PC-3 (cell line): ENCODE measurements at regions of chr7 and their contacts with region 1.

Region 1: DNA sequence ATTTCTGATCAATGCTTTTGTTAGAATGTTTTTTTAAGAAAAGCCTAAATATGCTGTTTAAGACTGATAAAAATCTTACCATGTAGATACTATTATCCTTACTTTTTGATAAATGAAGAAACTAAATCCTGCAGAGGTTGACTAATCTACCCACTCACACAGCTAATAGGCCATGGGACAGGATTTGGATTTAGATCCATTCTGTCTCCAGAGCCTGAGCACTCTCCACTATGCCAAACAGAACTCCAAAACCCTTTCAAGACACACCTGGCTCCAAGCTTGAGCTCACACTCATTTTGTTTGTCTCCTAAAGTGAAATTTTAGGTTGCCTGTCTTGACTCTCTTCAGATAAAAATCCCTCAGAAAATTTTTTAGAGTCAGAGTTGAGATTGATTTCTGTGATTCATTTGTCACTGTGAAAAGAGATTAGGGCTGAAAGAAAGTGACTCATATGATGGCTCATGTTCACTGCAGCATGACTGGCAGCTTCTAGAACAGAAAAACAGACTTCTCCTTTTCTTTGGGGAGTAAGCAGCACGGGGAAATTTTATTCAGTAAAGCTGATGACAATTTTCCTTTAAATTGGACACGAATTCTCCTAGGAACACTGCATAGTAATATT is 132.3 kb upstream of the POT1 start:
- DNase-seq: peak; percentile 78
- ATAC-seq: peak; percentile 80
- H3K4me3 ChIP-seq: peak overlapping the region; percentile 11; the same call in 1 of the 2 replicates
- H3K27ac ChIP-seq: peak overlapping the region; percentile 77
- H3K4me1 ChIP-seq: peaks cover 16% of the 10 kb centered on the region
- H3K27me3 ChIP-seq: no peaks in the 10 kb centered on the region
- CTCF ChIP-seq: no peak

Region 2: GRCh38 chr7:125201002-125201401 is 139.1 kb after region 1 on chr7:
- CTCF ChIA-PET with region 1: interaction called, 9 read pairs
- POLR2A ChIA-PET with region 1: no interaction called
- intact Hi-C with region 1: loop called (anchors 1 kb)
- DNase-seq: no peak
- ATAC-seq: no peak
- H3K4me3 ChIP-seq: no peak overlapping the region
- H3K27ac ChIP-seq: no peak overlapping the region
- H3K4me1 ChIP-seq: no peaks in the 10 kb centered on the region
- H3K27me3 ChIP-seq: no peaks in the 10 kb centered on the region
- CTCF ChIP-seq: no peak

Region 3: DNA sequence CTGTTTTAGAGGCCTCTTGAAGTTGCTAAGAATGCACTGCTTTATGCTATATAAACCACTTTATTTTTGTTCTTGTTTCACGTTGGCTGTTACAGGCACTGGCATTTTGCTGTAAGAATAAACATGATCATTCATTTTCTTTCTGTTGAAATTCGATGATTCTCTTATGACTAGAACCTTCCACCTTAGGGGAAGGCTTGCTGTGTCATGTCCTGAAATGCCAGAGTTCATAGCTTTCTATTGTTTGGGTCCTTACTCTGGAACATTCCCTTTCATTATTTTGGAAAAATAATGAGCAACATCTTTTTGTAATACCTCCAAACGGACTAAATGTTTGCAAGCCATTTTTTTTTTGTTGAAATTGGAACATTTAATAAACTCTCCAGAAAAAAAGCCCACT is 362.8 kb after region 1 on chr7:
- CTCF ChIA-PET with region 1: no interaction called
- POLR2A ChIA-PET with region 1: no interaction called
- intact Hi-C with region 1: loop called (anchors 5 kb)
- DNase-seq: no peak
- ATAC-seq: no peak
- H3K4me3 ChIP-seq: no peak overlapping the region
- H3K27ac ChIP-seq: no peak overlapping the region
- H3K4me1 ChIP-seq: peaks cover 11% of the 10 kb centered on the region
- H3K27me3 ChIP-seq: no peaks in the 10 kb centered on the region
- CTCF ChIP-seq: no peak

Region 4: GRCh38 chr7:125602441-125602840 is 540.6 kb after region 1 on chr7:
- CTCF ChIA-PET with region 1: no interaction called
- POLR2A ChIA-PET with region 1: no interaction called
- intact Hi-C with region 1: loop called (anchors 5 kb)
- DNase-seq: no peak
- ATAC-seq: peak; percentile 27; the same call in 1 of the 2 replicates
- H3K4me3 ChIP-seq: no peak overlapping the region
- H3K27ac ChIP-seq: no peak overlapping the region
- H3K4me1 ChIP-seq: no peaks in the 10 kb centered on the region
- H3K27me3 ChIP-seq: no peaks in the 10 kb centered on the region
- CTCF ChIP-seq: no peak

Region 5: DNA sequence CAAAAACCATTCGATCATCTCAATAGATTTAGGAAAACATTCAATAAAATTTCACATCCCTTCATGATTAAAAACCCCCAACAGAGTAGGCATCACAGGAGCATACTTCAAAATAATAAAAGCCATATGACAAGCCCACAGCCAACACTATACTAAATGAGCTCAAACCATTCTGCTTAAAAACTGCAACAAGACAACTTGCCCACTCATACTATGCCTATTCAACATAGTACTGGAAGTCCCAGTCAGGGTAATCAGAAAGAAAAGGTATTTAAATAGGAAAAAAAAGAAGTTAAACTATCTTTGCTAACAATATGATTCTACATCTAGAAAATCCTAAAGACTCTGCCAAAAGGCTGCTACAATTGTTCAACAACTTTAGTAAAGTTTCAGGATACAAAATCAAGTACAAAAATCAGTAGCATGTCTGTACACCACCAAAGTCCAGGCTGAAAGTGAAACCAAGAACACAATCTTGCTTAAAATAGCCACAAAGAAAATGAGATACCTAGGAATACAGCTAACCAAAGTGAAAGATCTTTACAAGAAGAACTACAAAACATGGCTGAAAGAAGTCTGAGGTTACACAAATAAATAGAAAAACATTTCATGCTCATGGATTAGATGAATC is 1308.3 kb after region 1 on chr7:
- CTCF ChIA-PET with region 1: interaction called, 4 read pairs
- POLR2A ChIA-PET with region 1: no interaction called
- intact Hi-C with region 1: loop called (anchors 5 kb)
- DNase-seq: no peak
- ATAC-seq: no peak
- H3K4me3 ChIP-seq: no peak overlapping the region
- H3K27ac ChIP-seq: no peak overlapping the region
- H3K4me1 ChIP-seq: no peaks in the 10 kb centered on the region
- H3K27me3 ChIP-seq: no peaks in the 10 kb centered on the region
- CTCF ChIP-seq: no peak